ENCODE measurements at regions of chr1 and their contacts with region 1.

Region 1: DNA sequence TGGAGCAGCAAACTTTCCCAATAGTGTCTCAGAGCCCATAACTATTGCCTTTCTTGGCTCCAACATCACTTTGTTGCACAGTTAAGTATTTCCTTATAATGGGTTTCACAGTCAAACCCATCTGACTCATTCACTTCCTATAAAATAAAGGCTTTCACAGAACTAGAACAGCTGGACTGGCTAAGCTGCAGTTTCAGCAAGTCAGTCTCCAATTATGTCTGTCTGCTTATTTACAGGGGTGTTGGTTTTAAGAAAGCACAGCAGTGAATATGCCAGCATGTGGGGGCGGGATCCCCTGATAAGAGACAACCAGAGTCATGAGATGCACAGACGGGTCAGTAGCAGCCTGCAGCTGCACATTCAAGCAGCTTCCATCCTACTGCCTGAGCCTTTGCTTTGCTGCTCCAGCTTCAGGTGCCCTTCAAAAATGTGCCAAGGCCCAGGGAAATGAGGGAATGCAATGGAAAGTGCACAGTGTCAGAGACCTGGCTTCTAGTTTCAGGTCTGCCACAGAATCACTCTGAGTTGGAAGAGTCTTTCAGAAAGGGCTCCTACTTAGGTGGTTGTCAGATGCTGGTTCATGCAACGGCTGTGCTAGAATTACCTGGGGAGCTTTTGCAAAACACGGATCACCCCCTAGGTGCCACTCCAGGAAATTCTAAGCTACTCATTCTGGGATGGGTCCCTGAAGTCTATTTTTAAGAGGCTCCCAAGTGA is 24.8 kb downstream of the RNF19B start:
- DNase-seq: no peak
- CTCF ChIP-seq: no peak

Region 2: GRCh38 chr1:32568929-32569328 is 370.9 kb before region 1 on chr1:
- in situ Hi-C with region 1: no loop called
- DNase-seq: no peak
- CTCF ChIP-seq: no peak

Region 3: DNA sequence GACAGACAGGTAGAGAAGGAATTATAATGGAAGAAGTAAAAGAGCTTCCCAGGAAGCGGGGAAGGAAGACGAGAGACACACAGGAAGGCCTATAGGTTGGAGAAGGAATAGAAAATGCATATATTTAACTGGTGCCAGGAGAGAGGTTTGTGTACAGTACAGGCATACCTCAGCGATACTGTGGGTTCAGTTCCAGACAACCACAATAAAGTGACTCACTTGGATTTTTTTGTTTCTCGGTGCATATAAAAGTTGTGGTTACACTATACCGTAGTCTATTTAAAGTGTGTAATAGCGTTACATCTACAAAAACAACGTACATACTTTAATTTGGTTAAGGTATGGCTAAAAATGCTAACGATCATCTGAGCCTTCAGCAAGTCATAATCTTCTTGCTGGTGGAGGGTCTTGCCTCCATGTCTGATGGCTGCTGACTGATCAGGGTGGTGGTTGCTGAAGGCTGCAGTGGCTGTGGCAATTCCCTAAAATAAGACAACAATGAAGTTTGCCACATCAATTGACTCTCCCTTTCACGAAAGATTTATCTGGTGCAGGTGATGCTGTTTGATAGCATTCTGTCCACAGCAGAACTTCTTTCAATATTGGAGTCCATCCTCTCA is 138.6 kb before region 1 on chr1:
- in situ Hi-C with region 1: no loop called
- DNase-seq: no peak
- CTCF ChIP-seq: no peak

Region 4: GRCh38 chr1:33007190-33008050 is 67.6 kb after region 1 on chr1:
- in situ Hi-C with region 1: loop called (anchors 10 kb)
- DNase-seq: no peak
- CTCF ChIP-seq: peak; percentile 6

Region 5: GRCh38 chr1:33072707-33073106 is 132.9 kb after region 1 on chr1:
- in situ Hi-C with region 1: loop called (anchors 10 kb)
- DNase-seq: no peak
- CTCF ChIP-seq: no peak

Measured in GM13976 (cell line).